ENCODE measurements at regions of chr10 and their contacts with region 1.

Region 1: GRCh38 chr10:89861584-89862301 is 160.4 kb downstream of the KIF20B start:
- DNase-seq: peak; percentile 69
- H3K4me3 Mint-ChIP-seq: no peak overlapping the region
- H3K27ac Mint-ChIP-seq: peak overlapping the region; percentile 83
- H3K4me1 Mint-ChIP-seq: peaks cover 27% of the 10 kb centered on the region
- H3K27me3 Mint-ChIP-seq: no peaks in the 10 kb centered on the region

Region 2: DNA sequence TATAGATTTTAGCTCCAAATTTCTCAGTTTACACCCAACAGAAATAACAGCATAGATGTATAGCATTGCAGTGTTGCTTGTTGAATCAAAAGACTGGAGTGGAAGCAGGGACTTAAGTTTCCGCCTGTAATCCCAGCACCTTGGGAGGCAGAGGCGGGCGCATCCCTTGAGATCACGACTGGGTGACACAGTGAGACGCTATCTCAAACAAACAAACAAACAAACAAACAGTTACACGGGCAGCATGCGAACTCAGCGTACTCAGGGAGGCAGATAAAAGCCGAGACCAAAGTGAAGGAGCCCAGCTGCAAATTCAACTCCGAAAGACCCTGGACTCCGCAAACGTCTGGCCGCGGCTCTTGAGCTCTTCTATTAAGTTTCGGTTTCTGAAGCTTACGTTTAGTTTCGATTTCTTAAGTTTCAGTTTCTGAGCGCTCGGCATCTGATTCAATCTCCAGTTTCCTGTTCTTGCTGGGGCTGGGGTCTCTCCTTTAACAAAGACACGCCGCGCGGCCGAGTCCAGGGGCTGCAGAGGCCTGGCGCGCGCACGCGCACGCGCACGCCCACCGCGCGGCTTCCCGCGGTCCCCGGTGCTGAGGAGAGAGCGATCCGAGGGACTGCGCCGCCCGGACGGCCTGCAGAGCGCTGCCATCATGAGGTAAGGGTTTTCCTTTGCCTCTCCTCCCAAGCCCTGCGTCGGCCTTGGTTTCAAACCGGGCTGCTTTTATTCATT is 447.4 kb before region 1 on chr10 and contains the start of gene IFIT5:
- CTCF ChIA-PET with region 1: no interaction called
- intact Hi-C with region 1: loop called (anchors 5 kb)
- DNase-seq: peak; percentile 64
- H3K4me3 Mint-ChIP-seq: peak within 1 kb of the TSS; percentile 85
- H3K27ac Mint-ChIP-seq: peak within 1 kb of the TSS; percentile 96
- H3K4me1 Mint-ChIP-seq: peaks cover 45% of the 10 kb centered on the region
- H3K27me3 Mint-ChIP-seq: no peaks in the 10 kb centered on the region
- total RNA-seq, gene IFIT5: 7.0 to 7.2 TPM

Region 3: DNA sequence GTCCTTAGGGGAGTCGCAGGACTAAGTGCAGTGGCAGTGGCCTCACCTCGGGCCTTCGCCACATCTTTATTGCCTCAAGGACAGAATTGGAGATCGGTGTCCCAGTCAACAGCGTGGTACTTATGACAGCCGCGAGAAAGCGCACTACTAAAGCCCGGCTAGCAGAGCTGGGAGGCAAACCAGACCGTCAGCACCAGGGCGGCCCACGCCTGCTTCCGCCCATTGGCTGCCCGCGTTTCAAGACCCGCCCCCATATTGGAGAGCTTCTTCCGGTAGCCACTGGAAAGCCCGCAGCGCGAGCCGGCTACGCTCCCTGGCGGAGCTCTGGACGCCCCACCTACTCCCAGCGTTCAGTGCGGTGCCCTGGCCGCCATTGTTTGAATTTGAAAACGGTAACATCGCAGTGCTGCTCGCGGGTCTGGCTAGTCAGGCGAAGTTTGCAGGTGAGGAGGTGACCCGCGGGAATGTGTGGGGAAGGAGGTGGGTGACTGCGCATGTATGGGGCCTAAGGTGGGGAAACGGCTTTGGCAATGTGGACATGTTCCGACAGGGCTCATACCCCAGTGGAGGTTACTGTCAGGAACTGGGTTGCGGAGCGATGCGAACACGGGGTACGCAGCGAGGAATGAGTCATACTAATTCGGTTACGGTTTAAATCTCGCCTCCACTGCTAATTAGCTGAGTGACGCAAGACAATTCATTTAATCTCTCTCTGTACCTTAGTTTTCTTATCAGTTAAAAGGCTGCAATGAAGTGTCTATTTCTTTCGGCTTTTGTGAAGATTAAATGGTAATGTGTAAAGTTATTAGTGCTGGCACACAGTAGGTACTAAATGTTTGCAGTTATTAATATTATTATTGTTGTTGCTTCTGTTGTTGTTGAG is 160.3 kb before region 1 on chr10 and contains the start of gene KIF20B:
- CTCF ChIA-PET with region 1: no interaction called
- intact Hi-C with region 1: loop called (anchors 1 kb)
- DNase-seq: peak; percentile 97
- H3K4me3 Mint-ChIP-seq: peak within 1 kb of the TSS; percentile 90
- H3K27ac Mint-ChIP-seq: peak within 1 kb of the TSS; percentile 97
- H3K4me1 Mint-ChIP-seq: peaks cover 34% of the 10 kb centered on the region
- H3K27me3 Mint-ChIP-seq: no peaks in the 10 kb centered on the region
- total RNA-seq, gene KIF20B: 67.2 to 70.3 TPM

Region 4: DNA sequence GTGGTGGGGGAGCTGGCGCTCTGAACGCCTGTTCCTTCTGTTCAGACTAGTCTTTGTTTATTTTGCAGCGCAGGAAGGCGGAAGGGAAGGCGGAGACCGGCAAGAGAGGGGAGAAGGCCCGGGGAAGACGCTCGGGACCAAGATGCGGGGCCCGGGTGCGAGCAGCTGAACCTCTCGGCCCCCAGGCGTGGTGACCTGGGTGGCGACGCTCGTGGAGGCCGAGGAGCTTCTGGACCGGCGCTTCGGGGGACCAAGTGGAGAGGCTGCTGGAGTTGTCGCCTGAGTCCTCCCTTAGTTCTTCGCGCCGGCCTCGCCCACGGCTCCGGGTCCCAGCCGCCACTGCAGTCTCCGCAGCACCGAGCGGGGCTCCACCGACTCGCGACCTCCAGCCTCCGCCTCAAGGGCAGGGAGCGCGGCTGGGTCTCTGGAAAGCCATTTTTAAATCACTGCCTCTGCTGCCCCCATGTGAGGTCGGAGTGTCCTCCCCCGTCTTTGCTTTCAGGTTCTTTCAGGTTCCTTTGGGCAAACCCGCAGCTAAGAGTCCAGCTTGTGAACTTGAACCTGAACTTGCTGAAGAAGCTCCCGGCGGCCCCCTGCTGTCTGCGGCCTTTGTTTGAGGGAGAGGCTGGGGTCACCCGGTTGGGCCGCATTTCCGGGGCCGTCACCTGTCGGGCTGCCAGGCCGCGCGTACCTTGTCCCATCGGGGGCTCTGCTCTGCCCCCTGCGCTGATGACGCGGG is 24.4 kb before region 1 on chr10:
- CTCF ChIA-PET with region 1: no interaction called
- intact Hi-C with region 1: loop called (anchors 1 kb)
- DNase-seq: peak; percentile 29
- H3K4me3 Mint-ChIP-seq: peak overlapping the region; percentile 76
- H3K27ac Mint-ChIP-seq: no peak overlapping the region
- H3K4me1 Mint-ChIP-seq: peaks cover 8% of the 10 kb centered on the region
- H3K27me3 Mint-ChIP-seq: peaks cover 9% of the 10 kb centered on the region

Region 5: DNA sequence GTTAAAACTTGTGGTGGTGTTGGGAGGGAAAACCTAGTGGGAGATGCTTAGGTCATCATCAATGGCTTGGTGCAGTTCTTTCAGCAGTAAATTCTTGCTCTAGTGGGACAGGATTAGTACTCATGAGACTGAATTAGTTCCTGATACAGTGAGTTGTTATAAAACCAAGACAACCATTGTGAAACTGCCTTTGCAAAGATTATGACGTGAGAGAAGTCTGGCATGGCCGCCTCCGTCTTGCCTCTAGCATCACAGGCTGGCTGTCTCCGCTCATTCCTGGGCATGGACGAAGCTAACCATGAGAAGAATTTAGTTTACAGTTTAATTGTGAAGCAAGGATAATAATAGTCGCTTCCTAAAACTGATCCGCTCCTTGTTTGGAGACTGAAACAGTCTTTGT is 26.1 kb after region 1 on chr10:
- CTCF ChIA-PET with region 1: no interaction called
- intact Hi-C with region 1: no loop called
- DNase-seq: no peak
- H3K4me3 Mint-ChIP-seq: no peak overlapping the region
- H3K27ac Mint-ChIP-seq: no peak overlapping the region
- H3K4me1 Mint-ChIP-seq: no peaks in the 10 kb centered on the region
- H3K27me3 Mint-ChIP-seq: peaks cover 12% of the 10 kb centered on the region

Region 6: DNA sequence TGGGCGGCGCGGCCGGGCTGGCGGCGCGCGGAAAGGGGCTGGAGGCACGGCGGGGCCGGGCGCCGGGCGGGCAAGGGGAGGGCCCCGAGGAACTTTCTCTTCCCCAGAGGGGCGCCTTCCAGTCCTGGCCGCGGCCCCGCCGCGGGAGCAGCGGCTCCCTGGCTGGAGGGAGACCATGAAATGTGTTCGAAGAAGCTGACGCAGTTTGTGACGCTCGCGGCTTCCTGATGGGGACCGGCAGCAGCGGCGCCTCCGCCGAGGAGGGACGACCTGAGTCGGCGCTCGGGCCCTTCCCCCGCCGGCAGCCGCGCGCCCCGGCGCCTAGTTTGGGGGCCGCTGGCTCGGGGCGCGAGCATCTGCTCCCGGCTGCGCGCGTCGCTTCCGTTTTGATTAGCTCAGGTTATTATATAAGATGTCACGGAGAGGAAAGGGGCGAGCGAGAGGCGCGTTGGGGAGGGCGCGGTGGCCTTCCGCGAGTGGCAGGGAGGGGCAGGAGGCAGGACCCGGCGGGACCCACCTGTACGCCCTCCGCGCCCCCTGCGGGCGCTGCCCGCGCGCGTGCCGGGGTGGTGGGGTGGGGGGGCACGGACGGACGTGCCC is 1301.6 kb after region 1 on chr10:
- CTCF ChIA-PET with region 1: no interaction called
- intact Hi-C with region 1: loop called (anchors 5 kb)
- DNase-seq: peak; percentile 75
- H3K4me3 Mint-ChIP-seq: peak overlapping the region; percentile 80
- H3K27ac Mint-ChIP-seq: peak overlapping the region; percentile 78
- H3K4me1 Mint-ChIP-seq: peaks cover 33% of the 10 kb centered on the region
- H3K27me3 Mint-ChIP-seq: no peaks in the 10 kb centered on the region